ENCODE measurements at regions of chr1 and their contacts with region 1.

Region 1: DNA sequence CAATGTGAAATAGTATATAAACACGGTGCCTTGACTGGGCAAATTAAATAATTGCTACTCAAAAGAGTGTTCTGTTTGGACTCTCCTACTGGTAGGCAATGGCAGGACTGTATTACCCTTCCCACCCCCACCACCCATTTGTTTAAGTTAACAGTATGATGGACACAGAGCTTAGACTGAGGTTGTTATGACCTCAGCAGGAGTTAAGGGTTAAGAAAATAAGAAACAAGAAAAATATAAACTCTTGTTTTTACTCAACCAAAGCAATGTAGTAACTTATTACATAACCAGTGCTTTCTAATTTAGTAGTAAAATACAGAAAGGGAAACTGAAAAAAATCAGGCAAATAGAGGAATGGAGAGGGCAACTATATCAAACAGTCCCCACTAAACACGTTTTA is 19.9 kb upstream of the SERPINC1 start:
- H3K4me3 Mint-ChIP-seq: no peak overlapping the region
- H3K27ac Mint-ChIP-seq: no peak overlapping the region
- H3K4me1 Mint-ChIP-seq: no peaks in the 10 kb centered on the region
- H3K27me3 Mint-ChIP-seq: no peaks in the 10 kb centered on the region

Region 2: DNA sequence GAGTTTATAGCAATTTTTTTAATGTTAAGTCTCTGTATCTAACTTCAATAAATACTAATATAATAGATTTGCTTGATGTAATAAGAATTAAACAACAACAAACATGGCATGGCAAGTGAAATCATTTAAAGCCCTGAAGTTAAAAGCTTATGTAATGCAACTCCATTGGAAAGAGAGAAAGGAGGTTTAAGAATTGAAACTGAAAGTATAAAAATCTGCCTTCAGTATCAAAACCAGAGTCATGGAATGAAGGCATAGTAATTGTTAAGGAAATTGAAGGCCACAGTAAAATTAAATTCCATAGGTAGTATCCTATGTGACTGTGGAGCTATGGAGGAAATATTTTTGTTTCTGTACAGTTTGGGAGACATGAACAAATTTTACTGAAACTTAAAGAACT is 404.8 kb before region 1 on chr1:
- intact Hi-C with region 1: no loop called
- H3K4me3 Mint-ChIP-seq: no peak overlapping the region
- H3K27ac Mint-ChIP-seq: no peak overlapping the region
- H3K4me1 Mint-ChIP-seq: no peaks in the 10 kb centered on the region
- H3K27me3 Mint-ChIP-seq: no peaks in the 10 kb centered on the region

Region 3: DNA sequence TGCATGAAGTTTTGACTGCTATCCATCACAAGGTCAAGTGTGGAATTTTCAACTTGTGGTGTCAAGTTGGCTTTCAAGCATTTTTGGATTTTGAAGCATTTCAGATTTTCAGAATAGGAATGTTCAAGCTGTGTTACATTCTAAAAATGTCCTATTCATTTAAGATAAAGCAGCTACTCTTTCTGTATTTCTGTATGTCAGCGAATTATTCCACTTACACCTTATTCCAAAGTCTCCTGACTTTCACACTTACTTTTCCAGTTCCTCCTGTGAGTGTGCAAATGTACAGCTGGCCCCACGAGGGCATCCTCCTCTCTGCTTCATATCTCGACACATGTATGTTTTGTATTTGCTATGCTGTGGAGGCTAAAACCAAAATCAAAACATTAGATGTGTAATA is 33.2 kb after region 1 on chr1:
- intact Hi-C with region 1: loop called (anchors 5 kb)
- H3K4me3 Mint-ChIP-seq: no peak overlapping the region
- H3K27ac Mint-ChIP-seq: no peak overlapping the region
- H3K4me1 Mint-ChIP-seq: no peaks in the 10 kb centered on the region
- H3K27me3 Mint-ChIP-seq: no peaks in the 10 kb centered on the region

Region 4: GRCh38 chr1:173986951-173987350 is 49.9 kb after region 1 on chr1:
- intact Hi-C with region 1: loop called (anchors 5 kb)
- H3K4me3 Mint-ChIP-seq: no peak overlapping the region
- H3K27ac Mint-ChIP-seq: peak overlapping the region; percentile 21
- H3K4me1 Mint-ChIP-seq: no peaks in the 10 kb centered on the region
- H3K27me3 Mint-ChIP-seq: no peaks in the 10 kb centered on the region

Measured in dendritic cell treated with granulocyte-macrophage colony-stimulating factor and Interleukin-4, amounts not matched to agents 40 ng/mL and 50 ng/mL, for 4 days (primary cell).